ENCODE measurements at regions of chr12 and their contacts with region 1.

Region 1: DNA sequence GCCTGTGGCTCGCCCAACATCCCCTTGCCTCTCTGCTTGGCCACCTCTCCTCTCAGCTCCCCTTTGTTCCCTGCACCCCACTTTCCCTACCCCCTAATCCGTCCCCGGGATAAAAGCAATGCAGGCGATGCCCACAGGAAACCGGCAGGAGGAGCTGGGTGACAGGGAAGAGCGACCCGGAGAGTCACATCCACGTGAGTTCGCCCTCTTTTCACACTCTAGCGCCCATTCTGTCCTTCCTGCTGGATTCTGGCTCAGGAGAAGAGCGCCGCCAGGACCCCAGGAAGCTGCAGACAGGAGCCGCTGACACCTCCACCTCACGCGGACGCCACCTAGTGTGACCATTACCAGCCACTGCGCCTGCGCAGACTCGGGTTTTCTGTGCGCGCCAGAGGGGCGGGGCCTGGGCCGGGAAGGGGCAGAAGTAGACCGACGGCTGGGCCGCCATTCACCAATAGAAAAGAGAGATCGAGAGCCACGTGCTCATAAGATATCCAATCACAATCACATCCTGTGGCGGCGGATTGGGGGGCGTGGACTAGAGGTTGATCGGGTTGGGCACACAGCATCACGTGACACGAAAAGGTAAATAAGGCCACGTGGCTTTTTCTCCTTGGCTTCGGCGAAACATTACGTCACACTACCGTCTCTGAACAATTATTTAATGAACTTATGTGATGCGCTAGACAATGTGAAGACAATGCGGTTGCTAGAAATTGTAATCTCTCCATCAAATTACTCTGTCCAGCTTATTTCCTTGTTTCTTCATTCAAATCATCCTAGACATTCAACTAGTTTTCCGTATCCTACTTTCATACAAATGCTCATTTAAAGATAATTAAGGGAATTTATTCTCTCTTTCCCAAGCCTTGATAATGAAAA is 10.1 kb downstream of the PLA2G1B start:
- DNase-seq: peak; percentile 99 to 100
- ATAC-seq: peak; percentile 97 to 100 (median 99)
- H3K4me3 ChIP-seq: peak overlapping the region; percentile 59
- H3K4me3 Mint-ChIP-seq: peak overlapping the region; percentile 97
- H3K27ac ChIP-seq: peak overlapping the region; percentile 85
- H3K27ac Mint-ChIP-seq: peak overlapping the region; percentile 96 to 98
- H3K4me1 ChIP-seq: peaks cover 12% of the 10 kb centered on the region
- H3K4me1 Mint-ChIP-seq: peaks cover 13 to 16% of the 10 kb centered on the region in 2 donors
- H3K27me3 ChIP-seq: no peaks in the 10 kb centered on the region
- H3K27me3 Mint-ChIP-seq: no peaks in the 10 kb centered on the region
- CTCF ChIP-seq: peak; percentile 35

Region 2: GRCh38 chr12:120292661-120293531 is 24.6 kb before region 1 on chr12 and contains the start of gene RNU4-1:
- intact Hi-C with region 1: loop called (anchors 1 kb)
- DNase-seq: peak; percentile 68 to 87
- ATAC-seq: peak; percentile 38 to 57 (median 55)
- H3K4me3 ChIP-seq: peak within 1 kb of the TSS; percentile 61
- H3K4me3 Mint-ChIP-seq: no peak within 1 kb of the TSS
- H3K27ac ChIP-seq: peak within 1 kb of the TSS; percentile 95
- H3K27ac Mint-ChIP-seq: no peak within 1 kb of the TSS
- H3K4me1 ChIP-seq: peaks cover 13% of the 10 kb centered on the region
- H3K4me1 Mint-ChIP-seq: no peaks in the 10 kb centered on the region
- H3K27me3 ChIP-seq: no peaks in the 10 kb centered on the region
- H3K27me3 Mint-ChIP-seq: no peaks in the 10 kb centered on the region
- CTCF ChIP-seq: no peak
- total RNA-seq, gene RNU4-1: 768 to 1,610 (median 1,101) TPM

Region 3: DNA sequence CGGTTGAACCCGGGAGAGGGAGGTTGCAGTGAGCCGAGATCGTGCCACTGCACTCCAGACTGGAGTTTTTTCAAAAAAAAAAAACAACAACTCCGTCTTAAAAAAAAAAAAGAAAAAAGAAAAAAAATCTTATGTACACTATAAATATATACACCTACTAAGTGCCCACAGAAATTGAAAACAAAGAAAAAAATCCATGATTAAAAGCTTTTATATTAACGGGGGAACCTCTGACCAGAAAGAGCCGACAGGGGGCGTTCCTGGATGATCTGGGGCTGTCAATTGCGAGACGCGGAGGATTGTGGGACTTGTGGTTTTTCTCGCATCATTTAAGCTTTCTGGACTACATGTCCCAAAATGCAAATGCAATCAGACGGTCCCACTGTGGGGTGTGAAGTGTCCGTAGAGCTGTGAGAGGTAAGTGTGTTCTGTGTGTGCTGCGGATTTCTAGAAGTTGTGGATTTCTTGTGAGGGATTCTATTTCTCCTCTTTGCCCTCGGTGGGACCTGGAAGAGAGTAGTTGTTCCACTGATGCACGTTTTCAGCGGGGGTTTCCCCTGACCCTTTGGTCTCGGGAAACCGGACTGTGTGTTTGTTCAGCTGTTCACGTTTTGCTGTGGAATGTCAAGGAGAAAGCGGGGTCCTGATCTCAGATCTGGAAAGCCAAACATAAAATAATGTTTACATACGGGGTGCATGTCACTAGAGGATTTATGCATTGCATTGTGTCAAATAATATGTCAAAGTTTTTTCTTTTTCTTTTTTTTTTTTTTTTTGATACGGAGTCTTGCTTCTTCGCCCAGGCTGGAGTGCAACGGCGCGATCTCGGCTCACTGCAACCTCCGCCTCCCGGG is 15.3 kb before region 1 on chr12 and contains the start of gene SIRT4:
- intact Hi-C with region 1: loop called (anchors 1 kb)
- DNase-seq: peak; percentile 83 to 97
- ATAC-seq: peak; percentile 99 to 100 (median 99)
- H3K4me3 ChIP-seq: peak within 1 kb of the TSS; percentile 52
- H3K4me3 Mint-ChIP-seq: peak within 1 kb of the TSS; percentile 98
- H3K27ac ChIP-seq: no peak within 1 kb of the TSS
- H3K27ac Mint-ChIP-seq: peak within 1 kb of the TSS; percentile 87 to 88
- H3K4me1 ChIP-seq: peaks cover 6% of the 10 kb centered on the region
- H3K4me1 Mint-ChIP-seq: peaks cover 6% of the 10 kb centered on the region in 2 donors
- H3K27me3 ChIP-seq: no peaks in the 10 kb centered on the region
- H3K27me3 Mint-ChIP-seq: no peaks in the 10 kb centered on the region
- CTCF ChIP-seq: peak; percentile 86
- total RNA-seq, gene SIRT4: 2.0 to 2.1 (median 2.1) TPM

Region 4: GRCh38 chr12:120640840-120641833 is 323.7 kb after region 1 on chr12:
- intact Hi-C with region 1: loop called (anchors 10 kb)
- DNase-seq: peak; percentile 36 to 71
- ATAC-seq: peak; percentile 77 to 90 (median 83)
- H3K4me3 ChIP-seq: no peak overlapping the region
- H3K4me3 Mint-ChIP-seq: peak overlapping the region; percentile 79
- H3K27ac ChIP-seq: no peak overlapping the region
- H3K27ac Mint-ChIP-seq: no peak overlapping the region
- H3K4me1 ChIP-seq: peaks cover 15% of the 10 kb centered on the region
- H3K4me1 Mint-ChIP-seq: peaks cover 5 to 6% of the 10 kb centered on the region in 2 donors
- H3K27me3 ChIP-seq: peaks cover 24% of the 10 kb centered on the region
- H3K27me3 Mint-ChIP-seq: peaks cover 42 to 45% of the 10 kb centered on the region in 2 donors
- CTCF ChIP-seq: no peak